ENCODE measurements at regions of chr17 and their contacts with region 1.

Region 1: DNA sequence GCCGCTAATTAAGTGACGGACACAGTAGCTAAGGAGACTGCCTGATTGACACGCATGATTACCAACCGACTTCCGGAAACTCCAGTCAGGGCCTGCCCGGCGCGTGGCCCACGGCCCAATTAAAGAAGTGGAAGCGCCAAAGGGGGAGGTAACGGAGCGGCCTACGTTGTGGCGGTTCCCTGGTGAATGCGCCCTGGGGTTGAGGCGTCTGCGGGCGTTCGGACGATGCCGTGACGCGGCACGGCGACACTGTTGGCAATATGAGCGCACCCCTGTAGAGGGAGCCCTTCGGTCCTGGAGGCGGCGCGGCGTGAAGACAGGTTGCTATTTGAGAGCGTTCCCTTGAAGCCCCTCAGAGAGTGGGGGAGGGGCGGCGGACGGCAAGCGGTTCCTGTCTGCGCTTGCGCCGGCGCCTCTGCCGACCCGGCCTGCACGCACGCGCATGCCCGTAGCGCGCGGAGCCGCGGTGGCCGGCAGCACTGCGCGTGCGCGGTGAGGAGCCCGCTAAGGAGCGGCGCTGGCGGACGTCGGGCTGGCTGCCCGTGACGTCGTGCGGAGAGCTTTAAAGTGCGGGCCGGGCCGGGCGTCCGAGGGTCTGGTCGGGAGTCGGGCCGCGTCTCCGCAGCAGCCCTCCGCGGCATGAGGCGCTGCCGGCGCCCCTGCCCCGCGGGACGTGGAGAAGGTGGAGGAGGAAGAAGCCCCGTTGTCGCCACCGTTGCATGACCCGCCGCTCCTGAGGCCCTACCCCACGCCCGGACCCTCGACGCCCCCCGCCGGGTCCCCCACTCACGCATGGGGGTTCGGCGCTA is at the start of gene ALKBH5:
- DNase-seq: peak; percentile 98
- H3K4me3 Mint-ChIP-seq: peak within 1 kb of the TSS; percentile 96
- H3K27ac Mint-ChIP-seq: peak within 1 kb of the TSS; percentile 96
- H3K4me1 Mint-ChIP-seq: peaks cover 52% of the 10 kb centered on the region
- H3K27me3 Mint-ChIP-seq: no peaks in the 10 kb centered on the region
- total RNA-seq, gene ALKBH5: 83.4 to 86.7 TPM

Region 2: GRCh38 chr17:17591355-17592298 is 591.9 kb before region 1 on chr17 and contains the start of gene PEMT:
- CTCF ChIA-PET with region 1: no interaction called
- intact Hi-C with region 1: loop called (anchors 2 kb)
- DNase-seq: peak; percentile 97
- H3K4me3 Mint-ChIP-seq: peak within 1 kb of the TSS; percentile 93
- H3K27ac Mint-ChIP-seq: peak within 1 kb of the TSS; percentile 88
- H3K4me1 Mint-ChIP-seq: peaks cover 20% of the 10 kb centered on the region
- H3K27me3 Mint-ChIP-seq: no peaks in the 10 kb centered on the region
- total RNA-seq, gene PEMT: 33.7 to 35.6 TPM

Region 3: DNA sequence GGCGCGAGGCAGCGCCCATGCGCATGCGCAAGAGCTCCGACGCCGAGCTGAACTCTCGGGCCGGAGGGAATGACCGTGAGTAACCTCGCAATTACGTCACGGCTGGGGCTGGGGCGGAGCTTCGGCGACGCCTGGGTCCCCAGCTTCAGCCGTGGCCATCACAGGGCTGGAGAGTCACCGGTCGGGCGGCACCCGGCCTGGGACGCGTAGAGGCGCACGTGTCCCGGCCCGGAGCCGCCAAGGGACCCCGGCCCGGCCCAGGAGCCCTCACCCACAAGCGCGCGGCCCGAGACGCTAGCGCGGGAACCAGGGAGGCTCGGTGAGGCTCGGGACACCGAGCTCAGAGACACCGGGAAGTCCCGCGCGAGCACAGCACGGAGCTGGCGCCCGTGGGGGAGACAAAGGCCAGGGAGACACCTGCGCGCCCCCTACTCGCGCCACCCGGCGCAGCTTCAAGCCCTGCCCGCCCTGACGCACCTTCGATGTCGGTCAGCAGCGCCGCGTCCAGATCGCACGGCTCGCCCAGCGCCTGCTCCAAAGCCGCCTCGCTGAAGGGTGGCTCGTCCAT is 347.2 kb before region 1 on chr17:
- CTCF ChIA-PET with region 1: no interaction called
- intact Hi-C with region 1: loop called (anchors 2 kb)
- DNase-seq: peak; percentile 99
- H3K4me3 Mint-ChIP-seq: peak overlapping the region; percentile 91
- H3K27ac Mint-ChIP-seq: peak overlapping the region; percentile 98
- H3K4me1 Mint-ChIP-seq: peaks cover 72% of the 10 kb centered on the region
- H3K27me3 Mint-ChIP-seq: no peaks in the 10 kb centered on the region

Region 4: GRCh38 chr17:18038861-18039534 is 144.5 kb before region 1 on chr17 and contains the starts of genes ATPAF2 and GID4:
- CTCF ChIA-PET with region 1: no interaction called
- intact Hi-C with region 1: loop called (anchors 1 kb)
- DNase-seq: peak; percentile 100
- H3K4me3 Mint-ChIP-seq: peak within 1 kb of the TSS; percentile 86
- H3K27ac Mint-ChIP-seq: peak within 1 kb of the TSS; percentile 79
- H3K4me1 Mint-ChIP-seq: peaks cover 40% of the 10 kb centered on the region
- H3K27me3 Mint-ChIP-seq: no peaks in the 10 kb centered on the region
- total RNA-seq, gene ATPAF2: 24.7 to 25.7 TPM
- total RNA-seq, gene GID4: 5.2 to 6.0 TPM

Region 5: GRCh38 chr17:18158022-18158600 is 25.4 kb before region 1 on chr17:
- CTCF ChIA-PET with region 1: no interaction called
- intact Hi-C with region 1: loop called (anchors 1 kb)
- DNase-seq: peak; percentile 98
- H3K4me3 Mint-ChIP-seq: peak overlapping the region; percentile 70
- H3K27ac Mint-ChIP-seq: peak overlapping the region; percentile 47
- H3K4me1 Mint-ChIP-seq: peaks cover 13% of the 10 kb centered on the region
- H3K27me3 Mint-ChIP-seq: no peaks in the 10 kb centered on the region

Region 6: DNA sequence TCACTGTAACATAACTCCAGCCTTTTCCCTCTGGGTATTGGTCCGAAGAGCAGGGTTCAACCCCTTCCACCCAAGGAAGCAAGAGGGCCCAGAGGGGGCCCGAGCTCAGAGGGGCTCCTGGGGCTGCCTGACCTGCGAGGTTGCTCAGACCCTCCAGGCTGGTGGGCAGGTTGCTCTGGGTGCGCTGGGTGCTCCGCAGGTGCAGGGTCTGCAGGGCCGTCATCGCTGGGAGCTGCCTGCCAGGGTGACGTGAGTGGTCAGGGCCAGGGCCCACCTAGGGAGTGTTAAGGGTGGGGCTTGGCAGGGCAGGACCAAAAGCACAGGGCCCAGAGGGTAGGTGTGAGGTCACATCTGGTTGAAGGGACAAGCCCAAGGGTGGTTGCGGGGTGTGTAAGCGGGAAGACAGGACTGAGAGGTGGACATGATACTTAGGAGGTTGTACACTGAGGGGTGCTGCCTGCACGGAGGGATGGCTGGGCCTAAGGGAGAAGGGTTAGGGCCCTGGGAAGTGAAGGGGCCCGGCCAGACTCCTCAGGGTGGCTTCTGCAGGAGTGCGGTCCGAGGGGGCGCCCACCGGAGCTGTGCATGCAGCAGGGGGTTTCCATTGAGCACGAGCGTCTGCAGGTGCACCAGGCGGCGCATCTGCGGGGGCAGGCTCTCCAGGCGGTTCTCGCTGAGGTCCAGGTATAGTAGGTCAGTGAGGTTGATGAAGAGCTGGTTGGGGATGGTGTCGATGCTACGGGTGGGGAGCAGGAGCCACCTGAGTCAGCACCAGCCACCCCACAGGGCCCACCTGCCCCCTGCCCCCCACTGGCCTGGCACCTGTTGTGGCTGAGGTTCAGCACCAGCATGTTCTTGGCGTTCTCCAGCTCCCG is 70.6 kb after region 1 on chr17:
- CTCF ChIA-PET with region 1: no interaction called
- intact Hi-C with region 1: no loop called
- DNase-seq: no peak
- H3K4me3 Mint-ChIP-seq: no peak overlapping the region
- H3K27ac Mint-ChIP-seq: no peak overlapping the region
- H3K4me1 Mint-ChIP-seq: peaks cover 15% of the 10 kb centered on the region
- H3K27me3 Mint-ChIP-seq: no peaks in the 10 kb centered on the region

Region 7: DNA sequence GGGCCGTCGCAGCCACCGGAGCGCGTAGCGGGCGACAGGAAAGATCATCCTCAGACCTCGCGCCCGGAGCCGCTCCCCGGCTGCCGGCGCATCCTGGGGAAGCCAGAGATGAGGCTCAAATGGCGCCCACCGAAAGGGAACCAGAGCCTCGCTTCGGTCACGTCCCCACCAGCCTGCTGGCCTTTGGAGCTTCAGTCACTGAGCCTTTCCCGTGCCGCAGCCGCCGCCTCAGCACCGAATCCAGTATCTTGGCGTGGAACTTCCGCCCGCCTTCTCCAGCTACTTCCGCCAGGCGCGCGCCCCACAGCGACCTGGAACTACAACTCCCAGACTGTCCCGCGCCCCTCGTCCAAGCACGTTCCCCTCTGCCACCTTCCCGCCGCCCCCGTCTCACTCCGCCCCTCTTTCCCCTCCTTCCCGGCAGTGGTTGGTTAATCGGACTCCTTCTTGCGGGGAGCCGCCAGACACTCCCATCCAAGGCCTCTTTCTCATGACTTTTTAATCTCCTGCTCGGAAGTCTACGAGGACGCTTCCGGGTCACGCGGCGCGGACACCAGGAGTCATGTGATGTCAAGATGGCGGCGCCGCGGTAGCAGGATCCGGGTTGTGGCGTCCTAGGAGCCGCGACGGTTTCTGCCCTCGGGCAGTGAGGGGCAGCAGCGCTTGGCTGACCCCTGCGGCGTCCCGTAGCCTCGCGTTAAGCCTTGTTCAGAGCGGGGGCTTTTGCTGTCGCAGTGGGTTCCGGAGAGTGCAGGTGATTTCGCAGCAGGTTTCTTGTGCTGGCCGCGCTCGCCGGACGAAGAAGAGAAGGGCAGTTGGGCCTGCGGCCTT is 131.4 kb after region 1 on chr17 and contains the starts of genes SMCR8 and TOP3A:
- CTCF ChIA-PET with region 1: no interaction called
- intact Hi-C with region 1: loop called (anchors 1 kb)
- DNase-seq: peak; percentile 98
- H3K4me3 Mint-ChIP-seq: peak within 1 kb of the TSS; percentile 92
- H3K27ac Mint-ChIP-seq: peak within 1 kb of the TSS; percentile 99
- H3K4me1 Mint-ChIP-seq: peaks cover 75% of the 10 kb centered on the region
- H3K27me3 Mint-ChIP-seq: no peaks in the 10 kb centered on the region
- total RNA-seq, gene SMCR8: 8.5 to 8.8 TPM
- total RNA-seq, gene TOP3A: 59.0 to 59.5 TPM

Measured in activated naive CD4-positive, alpha-beta T cell treated with anti-CD3 and anti-CD28 coated beads for 36 hours (primary cell).